MCF 10A (cell line): ENCODE measurements at regions of chr19 and their contacts with region 1.

Region 1: GRCh38 chr19:18192673-18193387 is at the start of gene MPV17L2:
- DNase-seq: peak; percentile 100
- H3K4me3 Mint-ChIP-seq: peak within 1 kb of the TSS; percentile 78
- H3K27ac Mint-ChIP-seq: peak within 1 kb of the TSS; percentile 72
- H3K4me1 Mint-ChIP-seq: peaks cover 12% of the 10 kb centered on the region
- H3K27me3 Mint-ChIP-seq: no peaks in the 10 kb centered on the region
- CTCF ChIP-seq: no peak
- total RNA-seq, gene MPV17L2: 12.9 and 15.4 TPM in 2 replicates

Region 2: GRCh38 chr19:18141031-18141430 is 51.8 kb before region 1 on chr19:
- CTCF ChIA-PET with region 1: no interaction called
- POLR2A ChIA-PET with region 1: interaction called, 11 read pairs
- intact Hi-C with region 1: no loop called
- DNase-seq: no peak
- H3K4me3 Mint-ChIP-seq: no peak overlapping the region
- H3K27ac Mint-ChIP-seq: no peak overlapping the region
- H3K4me1 Mint-ChIP-seq: no peaks in the 10 kb centered on the region
- H3K27me3 Mint-ChIP-seq: no peaks in the 10 kb centered on the region
- CTCF ChIP-seq: no peak

Region 3: DNA sequence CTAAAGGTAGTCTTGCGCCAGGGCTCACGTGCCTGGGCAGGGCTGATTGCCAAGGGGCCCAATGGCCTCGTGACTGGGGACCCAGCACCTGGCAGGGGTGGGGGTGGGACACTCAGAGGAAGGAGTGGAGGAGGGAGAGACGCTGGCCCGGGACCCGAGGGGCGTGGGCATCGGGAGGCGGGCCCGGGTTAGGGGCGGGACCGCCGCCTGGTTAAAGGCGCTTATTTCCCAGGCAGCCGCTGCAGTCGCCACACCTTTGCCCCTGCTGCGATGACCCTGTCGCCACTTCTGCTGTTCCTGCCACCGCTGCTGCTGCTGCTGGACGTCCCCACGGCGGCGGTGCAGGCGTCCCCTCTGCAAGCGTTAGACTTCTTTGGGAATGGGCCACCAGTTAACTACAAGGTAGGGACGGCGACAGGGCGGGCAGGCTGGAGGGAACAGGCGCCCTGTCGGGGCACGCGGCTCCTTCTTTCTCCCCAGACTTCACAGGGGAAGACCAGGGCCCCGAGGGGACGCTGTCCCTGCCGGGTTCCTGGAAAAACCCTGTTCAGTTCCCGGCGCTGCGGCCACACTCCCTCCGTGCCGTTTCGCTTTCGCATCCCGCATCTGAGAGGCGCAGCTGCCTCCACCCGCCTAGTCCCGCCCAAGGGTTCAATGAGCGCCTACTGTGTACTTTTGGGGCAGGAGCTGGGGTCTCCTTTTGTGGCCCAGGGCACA is 19.1 kb before region 1 on chr19 and contains the start of gene IFI30:
- CTCF ChIA-PET with region 1: interaction called, 9 read pairs
- POLR2A ChIA-PET with region 1: interaction called, 35 read pairs
- intact Hi-C with region 1: no loop called
- DNase-seq: peak; percentile 72
- H3K4me3 Mint-ChIP-seq: peak within 1 kb of the TSS; percentile 80
- H3K27ac Mint-ChIP-seq: no peak within 1 kb of the TSS
- H3K4me1 Mint-ChIP-seq: peaks cover 5% of the 10 kb centered on the region
- H3K27me3 Mint-ChIP-seq: no peaks in the 10 kb centered on the region
- CTCF ChIP-seq: no peak
- total RNA-seq, gene IFI30: 4.7 and 9.1 TPM in 2 replicates

Region 4: GRCh38 chr19:18224525-18225354 is 31.9 kb after region 1 on chr19:
- CTCF ChIA-PET with region 1: interaction called, 5 read pairs
- POLR2A ChIA-PET with region 1: interaction called, 12 read pairs
- intact Hi-C with region 1: no loop called
- DNase-seq: peak; percentile 99
- H3K4me3 Mint-ChIP-seq: peak overlapping the region; percentile 75
- H3K27ac Mint-ChIP-seq: peak overlapping the region; percentile 17
- H3K4me1 Mint-ChIP-seq: peaks cover 5% of the 10 kb centered on the region
- H3K27me3 Mint-ChIP-seq: peaks cover 12% of the 10 kb centered on the region
- CTCF ChIP-seq: no peak

Region 5: GRCh38 chr19:18281082-18282020 is 88.5 kb after region 1 on chr19 and contains the start of gene JUND:
- CTCF ChIA-PET with region 1: interaction called, 3 read pairs
- POLR2A ChIA-PET with region 1: interaction called, 67 read pairs
- intact Hi-C with region 1: no loop called
- DNase-seq: peak; percentile 97
- H3K4me3 Mint-ChIP-seq: peak within 1 kb of the TSS; percentile 87
- H3K27ac Mint-ChIP-seq: peak within 1 kb of the TSS; percentile 98
- H3K4me1 Mint-ChIP-seq: peaks cover 13% of the 10 kb centered on the region
- H3K27me3 Mint-ChIP-seq: no peaks in the 10 kb centered on the region
- CTCF ChIP-seq: no peak
- total RNA-seq, gene JUND: 120 and 123 TPM in 2 replicates

Region 6: DNA sequence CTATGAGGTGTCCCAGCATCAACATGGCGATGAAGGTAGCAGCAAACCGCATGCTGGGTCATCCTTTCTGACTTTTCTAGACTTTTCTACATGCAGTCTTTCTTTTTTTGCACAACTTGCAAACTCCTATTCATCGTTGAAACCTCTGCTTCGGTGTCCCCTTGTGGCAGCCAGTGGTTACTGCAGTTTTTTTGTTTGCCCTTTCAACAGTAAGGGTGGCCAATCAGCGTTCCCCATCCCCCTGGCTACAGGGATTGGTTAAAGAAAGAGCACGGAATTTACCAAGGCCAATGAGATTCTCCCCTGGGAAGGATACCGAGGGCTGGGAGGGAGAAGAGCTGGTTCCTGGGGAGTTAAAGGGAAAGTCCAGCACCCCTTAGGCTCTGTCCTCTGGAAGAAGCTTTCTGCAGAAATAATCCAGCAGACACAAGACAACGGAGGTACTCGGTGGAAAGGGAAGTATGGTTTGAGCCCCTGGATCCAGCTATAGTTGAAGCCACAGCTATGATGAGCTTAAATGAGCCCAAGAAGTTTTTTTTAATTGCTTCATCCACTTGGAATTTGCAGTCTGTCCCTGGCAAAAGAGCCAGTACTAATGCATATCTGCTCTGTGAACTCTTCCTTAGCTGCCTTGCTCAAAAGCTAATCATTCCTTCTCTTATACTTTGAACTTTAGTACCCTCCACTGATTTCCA is 135.7 kb after region 1 on chr19:
- CTCF ChIA-PET with region 1: interaction called, 5 read pairs
- POLR2A ChIA-PET with region 1: interaction called, 17 read pairs
- intact Hi-C with region 1: loop called (anchors 1 kb)
- DNase-seq: peak; percentile 99
- H3K4me3 Mint-ChIP-seq: peak overlapping the region; percentile 67
- H3K27ac Mint-ChIP-seq: no peak overlapping the region
- H3K4me1 Mint-ChIP-seq: peaks cover 12% of the 10 kb centered on the region
- H3K27me3 Mint-ChIP-seq: no peaks in the 10 kb centered on the region
- CTCF ChIP-seq: peak; percentile 80